CD8-positive, alpha-beta T cell (primary cell): ENCODE measurements at regions of chr12 and their contacts with region 1.

Region 1: DNA sequence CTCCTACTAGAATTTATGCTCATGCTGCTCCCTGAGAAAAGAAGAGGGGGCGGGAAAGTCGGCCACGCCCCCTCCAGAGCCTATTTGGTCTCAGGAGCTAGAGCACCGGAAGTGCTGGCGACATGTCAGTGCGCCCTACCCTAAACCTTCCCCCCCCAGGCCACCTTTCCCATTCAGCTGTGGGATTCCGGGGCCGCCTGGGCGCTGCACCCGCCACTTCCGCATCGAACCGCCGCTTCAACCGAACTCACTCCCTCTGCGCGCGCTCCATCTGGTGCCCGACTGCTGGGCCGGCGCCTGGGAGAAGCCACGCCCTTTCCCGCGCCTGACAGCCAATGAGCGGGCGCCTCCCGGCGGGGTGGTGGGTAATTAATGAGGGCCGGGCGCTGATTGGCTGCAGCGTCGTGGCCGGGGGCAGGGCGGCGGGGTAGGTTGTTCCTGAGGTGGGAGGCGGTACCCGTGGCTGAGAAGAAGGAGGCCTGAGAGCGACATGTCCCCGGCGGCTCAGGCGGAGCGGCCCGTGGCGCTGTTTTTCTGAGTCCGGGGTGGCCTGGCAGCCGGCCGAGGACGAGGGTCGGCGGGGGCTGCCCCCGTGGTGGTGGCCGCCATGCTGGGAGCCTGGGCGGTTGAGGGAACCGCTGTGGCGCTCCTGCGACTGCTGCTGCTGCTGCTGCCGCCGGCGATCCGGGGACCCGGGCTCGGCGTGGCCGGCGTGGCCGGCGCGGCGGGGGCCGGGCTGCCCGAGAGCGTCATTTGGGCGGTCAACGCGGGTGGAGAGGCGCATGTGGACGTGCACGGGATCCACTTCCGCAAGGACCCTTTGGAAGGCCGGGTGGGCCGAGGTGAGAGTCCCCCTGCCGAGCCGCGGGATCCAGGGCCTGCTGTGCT is at the start of gene MLEC:
- DNase-seq: peak; percentile 98 to 99 (median 99)
- ATAC-seq: peak; percentile 83
- H3K4me3 ChIP-seq: peak within 1 kb of the TSS; percentile 88 to 90
- H3K4me3 Mint-ChIP-seq: peak within 1 kb of the TSS; percentile 91
- H3K27ac ChIP-seq: peak within 1 kb of the TSS; percentile 80 to 95
- H3K27ac Mint-ChIP-seq: peak within 1 kb of the TSS; percentile 92
- H3K4me1 ChIP-seq: peaks cover 29% of the 10 kb centered on the region
- H3K4me1 Mint-ChIP-seq: peaks cover 39% of the 10 kb centered on the region
- H3K27me3 ChIP-seq: no peaks in the 10 kb centered on the region
- H3K27me3 Mint-ChIP-seq: no peaks in the 10 kb centered on the region
- CTCF ChIP-seq: no peak
- total RNA-seq, gene MLEC: 20.3 to 22.5 TPM

Region 2: DNA sequence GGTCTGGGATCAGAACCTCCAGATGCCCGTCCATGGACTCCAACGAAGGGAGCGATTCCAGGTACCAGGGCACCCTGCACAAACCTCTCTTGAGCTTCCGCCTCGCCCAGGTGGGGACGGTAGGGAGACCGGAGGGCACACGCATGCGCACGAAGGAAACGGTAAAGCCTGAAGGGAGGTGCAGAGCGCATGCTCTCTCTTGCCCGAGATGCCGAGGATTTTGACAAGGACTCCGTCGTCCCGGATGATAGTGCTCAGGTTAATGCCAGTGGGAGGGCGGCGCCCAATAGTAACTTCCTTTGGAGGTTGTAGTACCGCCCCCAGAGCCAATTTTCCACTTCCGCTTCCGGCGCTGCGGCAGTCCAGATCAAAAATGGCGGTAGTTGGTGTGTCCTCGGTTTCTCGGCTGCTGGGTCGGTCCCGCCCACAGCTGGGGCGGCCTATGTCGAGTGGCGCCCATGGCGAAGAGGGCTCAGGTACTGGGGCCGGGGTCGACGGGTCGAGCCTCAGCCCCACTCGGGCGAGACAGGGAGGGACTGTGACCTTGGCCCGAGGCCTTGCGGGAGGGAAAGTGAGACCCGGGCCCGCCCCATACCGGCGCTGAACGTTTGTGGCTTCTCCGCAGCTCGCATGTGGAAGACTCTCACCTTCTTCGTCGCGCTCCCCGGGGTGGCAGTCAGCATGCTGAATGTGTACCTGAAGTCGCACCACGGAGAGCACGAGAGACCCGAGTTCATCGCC is 249.0 kb before region 1 on chr12 and contains the start of gene COX6A1:
- CTCF ChIA-PET with region 1: no interaction called
- POLR2A ChIA-PET with region 1: no interaction called
- intact Hi-C with region 1: loop called in 1 of 2 experiments (anchors 2 kb)
- DNase-seq: peak; percentile 91 to 100 (median 96)
- ATAC-seq: peak; percentile 95
- H3K4me3 ChIP-seq: peak within 1 kb of the TSS; percentile 74 to 76
- H3K4me3 Mint-ChIP-seq: peak within 1 kb of the TSS; percentile 88
- H3K27ac ChIP-seq: peak within 1 kb of the TSS; percentile 58 to 85
- H3K27ac Mint-ChIP-seq: peak within 1 kb of the TSS; percentile 91
- H3K4me1 ChIP-seq: peaks cover 26% of the 10 kb centered on the region
- H3K4me1 Mint-ChIP-seq: peaks cover 26% of the 10 kb centered on the region
- H3K27me3 ChIP-seq: no peaks in the 10 kb centered on the region
- H3K27me3 Mint-ChIP-seq: peaks cover 3% of the 10 kb centered on the region
- CTCF ChIP-seq: no peak
- total RNA-seq, gene COX6A1: 118 to 124 TPM

Region 3: DNA sequence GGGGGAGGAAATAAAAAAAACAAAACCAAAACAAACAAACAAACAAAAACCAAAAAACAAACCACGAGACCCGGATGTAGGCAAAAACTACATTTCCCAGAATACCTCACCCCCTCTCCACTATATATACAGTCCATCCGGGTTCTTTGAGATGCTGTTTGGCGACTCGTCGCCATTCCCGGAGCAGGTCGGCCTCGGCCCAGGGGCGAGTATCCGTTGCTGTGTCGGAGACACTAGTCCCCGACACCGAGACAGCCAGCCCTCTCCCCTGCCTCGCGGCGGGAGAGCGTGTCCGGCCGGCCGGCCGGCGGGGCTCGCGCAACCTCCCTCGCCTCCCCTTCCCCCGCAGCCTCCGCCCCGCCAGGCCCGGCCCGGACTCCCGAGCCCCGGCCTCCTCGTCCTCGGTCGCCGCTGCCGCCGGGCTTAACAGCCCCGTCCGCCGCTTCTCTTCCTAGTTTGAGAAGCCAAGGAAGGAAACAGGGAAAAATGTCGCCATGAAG is 152.7 kb before region 1 on chr12 and contains the start of gene RNF10:
- CTCF ChIA-PET with region 1: no interaction called
- POLR2A ChIA-PET with region 1: no interaction called
- intact Hi-C with region 1: loop called in 1 of 2 experiments (anchors 2 kb)
- DNase-seq: peak; percentile 48 to 92 (median 73)
- ATAC-seq: peak; percentile 69
- H3K4me3 ChIP-seq: peak within 1 kb of the TSS; percentile 89 to 95
- H3K4me3 Mint-ChIP-seq: peak within 1 kb of the TSS; percentile 96
- H3K27ac ChIP-seq: peak within 1 kb of the TSS; percentile 76 to 83
- H3K27ac Mint-ChIP-seq: peak within 1 kb of the TSS; percentile 95
- H3K4me1 ChIP-seq: peaks cover 38% of the 10 kb centered on the region
- H3K4me1 Mint-ChIP-seq: peaks cover 57% of the 10 kb centered on the region
- H3K27me3 ChIP-seq: no peaks in the 10 kb centered on the region
- H3K27me3 Mint-ChIP-seq: no peaks in the 10 kb centered on the region
- CTCF ChIP-seq: no peak
- total RNA-seq, gene RNF10: 402 to 410 TPM

Region 4: DNA sequence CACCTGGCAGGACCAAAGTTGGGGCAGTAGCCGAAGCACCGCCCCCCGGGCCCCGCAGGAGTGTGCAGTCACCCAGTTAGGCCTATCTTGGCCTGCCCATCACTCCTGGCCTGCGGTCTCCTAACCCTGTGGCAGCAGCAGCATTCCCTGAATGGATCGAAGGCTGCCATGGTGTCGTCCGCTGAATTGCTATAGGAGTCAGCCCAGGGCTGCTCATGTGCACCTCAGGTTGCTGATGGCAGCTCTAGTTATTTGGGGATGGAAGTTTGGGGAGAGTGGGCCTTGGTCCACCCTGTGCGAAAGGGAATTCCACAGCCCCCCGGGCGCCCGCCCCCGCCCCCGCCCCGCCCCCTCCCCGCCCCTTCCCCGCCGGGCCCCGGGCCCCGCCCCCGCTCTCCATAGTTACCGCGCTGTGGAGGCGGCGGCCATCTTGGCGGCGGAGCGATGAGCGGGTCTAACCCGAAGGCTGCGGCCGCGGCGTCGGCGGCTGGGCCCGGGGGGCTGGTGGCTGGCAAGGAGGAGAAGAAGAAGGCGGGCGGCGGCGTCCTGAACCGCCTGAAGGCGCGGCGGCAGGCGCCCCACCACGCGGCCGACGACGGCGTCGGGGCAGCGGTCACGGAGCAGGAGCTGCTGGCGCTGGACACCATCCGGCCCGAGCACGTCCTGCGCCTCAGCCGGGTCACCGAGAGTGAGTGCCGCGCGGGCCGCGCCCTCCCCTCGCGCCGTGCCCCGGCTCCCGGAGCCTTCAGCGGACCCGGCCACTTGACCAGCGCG is 23.3 kb after region 1 on chr12 and contains the start of gene UNC119B:
- CTCF ChIA-PET with region 1: interaction called, 4 read pairs
- POLR2A ChIA-PET with region 1: interaction called, 9 read pairs
- intact Hi-C with region 1: loop called (anchors 1 kb)
- DNase-seq: peak; percentile 38 to 85 (median 77)
- ATAC-seq: peak; percentile 88
- H3K4me3 ChIP-seq: peak within 1 kb of the TSS; percentile 64 to 68
- H3K4me3 Mint-ChIP-seq: peak within 1 kb of the TSS; percentile 93
- H3K27ac ChIP-seq: peak within 1 kb of the TSS; percentile 40 to 70
- H3K27ac Mint-ChIP-seq: peak within 1 kb of the TSS; percentile 89
- H3K4me1 ChIP-seq: peaks cover 22% of the 10 kb centered on the region
- H3K4me1 Mint-ChIP-seq: peaks cover 37% of the 10 kb centered on the region
- H3K27me3 ChIP-seq: no peaks in the 10 kb centered on the region
- H3K27me3 Mint-ChIP-seq: no peaks in the 10 kb centered on the region
- CTCF ChIP-seq: no peak
- total RNA-seq, gene UNC119B: 8.1 to 8.4 TPM

Region 5: GRCh38 chr12:121015825-121016766 is 329.2 kb after region 1 on chr12 and contains the start of gene C12orf43:
- CTCF ChIA-PET with region 1: no interaction called
- POLR2A ChIA-PET with region 1: no interaction called
- intact Hi-C with region 1: loop called in 1 of 2 experiments (anchors 1 kb)
- DNase-seq: peak; percentile 83 to 95 (median 92)
- ATAC-seq: peak; percentile 97
- H3K4me3 ChIP-seq: peak within 1 kb of the TSS; percentile 69 to 91
- H3K4me3 Mint-ChIP-seq: peak within 1 kb of the TSS; percentile 93
- H3K27ac ChIP-seq: peak within 1 kb of the TSS; percentile 60 to 89
- H3K27ac Mint-ChIP-seq: peak within 1 kb of the TSS; percentile 93
- H3K4me1 ChIP-seq: peaks cover 8% of the 10 kb centered on the region
- H3K4me1 Mint-ChIP-seq: peaks cover 21% of the 10 kb centered on the region
- H3K27me3 ChIP-seq: no peaks in the 10 kb centered on the region
- H3K27me3 Mint-ChIP-seq: no peaks in the 10 kb centered on the region
- CTCF ChIP-seq: no peak
- total RNA-seq, gene C12orf43: 20.7 to 21.4 TPM

Region 6: GRCh38 chr12:121399391-121400331 is 712.7 kb after region 1 on chr12 and contains the start of gene RNF34:
- CTCF ChIA-PET with region 1: no interaction called
- POLR2A ChIA-PET with region 1: no interaction called
- intact Hi-C with region 1: loop called in 1 of 2 experiments (anchors 2 kb)
- DNase-seq: peak; percentile 95 to 99 (median 97)
- ATAC-seq: peak; percentile 87
- H3K4me3 ChIP-seq: peak within 1 kb of the TSS; percentile 78 to 89
- H3K4me3 Mint-ChIP-seq: peak within 1 kb of the TSS; percentile 86
- H3K27ac ChIP-seq: peak within 1 kb of the TSS; percentile 78 to 90
- H3K27ac Mint-ChIP-seq: peak within 1 kb of the TSS; percentile 97
- H3K4me1 ChIP-seq: peaks cover 28% of the 10 kb centered on the region
- H3K4me1 Mint-ChIP-seq: peaks cover 33% of the 10 kb centered on the region
- H3K27me3 ChIP-seq: no peaks in the 10 kb centered on the region
- H3K27me3 Mint-ChIP-seq: no peaks in the 10 kb centered on the region
- CTCF ChIP-seq: no peak
- total RNA-seq, gene RNF34: 46.8 to 51.3 TPM